Body of pancreas (tissue), 4 donors: ENCODE measurements at regions of chr15 and their contacts with region 1.

Region 1: DNA sequence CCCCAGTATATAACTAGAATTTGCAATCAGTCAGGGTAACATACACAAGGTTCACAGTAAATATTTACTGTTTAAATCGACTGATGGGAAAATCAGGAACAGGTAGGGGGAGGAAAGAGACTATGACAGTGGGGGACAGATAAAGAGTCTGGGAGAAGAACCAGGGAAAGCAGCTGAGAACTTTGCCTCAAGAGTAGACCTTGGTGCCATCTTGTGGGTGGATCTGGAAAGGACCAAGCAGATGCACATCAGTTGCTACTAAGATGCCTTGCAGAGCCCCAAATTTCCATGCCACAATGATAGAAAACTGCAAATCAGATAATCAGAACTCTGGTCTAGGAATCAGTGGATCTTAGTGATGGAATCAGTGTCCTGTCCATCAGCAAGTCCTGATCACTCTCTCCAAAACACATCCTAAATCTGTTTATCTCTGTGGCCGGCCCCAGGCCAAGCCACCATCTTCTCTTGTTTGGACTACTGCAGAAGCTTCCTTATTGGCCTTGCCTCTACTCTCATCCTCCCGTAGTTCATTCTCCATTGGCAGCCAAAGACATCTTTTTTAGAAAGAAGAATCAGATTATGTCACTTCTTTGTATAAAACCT is 62.7 kb downstream of the PDE8A start:
- DNase-seq: peak; percentile 59 to 75 (median 68)
- ATAC-seq: peak; percentile 64
- H3K4me3 ChIP-seq: no peak overlapping the region
- H3K27ac ChIP-seq: no peak overlapping the region
- H3K4me1 ChIP-seq: peaks cover 9% of the 10 kb centered on the region
- H3K27me3 ChIP-seq: no peaks in the 10 kb centered on the region
- CTCF ChIP-seq: peak; percentile 28 to 76 (median 64)
- POLR2A ChIP-seq: no peak

Region 2: GRCh38 chr15:84863565-84864443 is 180.5 kb before region 1 on chr15:
- intact Hi-C with region 1: no loop called
- DNase-seq: no peak
- ATAC-seq: no peak
- H3K4me3 ChIP-seq: no peak overlapping the region
- H3K27ac ChIP-seq: no peak overlapping the region
- H3K4me1 ChIP-seq: no peaks in the 10 kb centered on the region
- H3K27me3 ChIP-seq: no peaks in the 10 kb centered on the region
- CTCF ChIP-seq: no peak
- POLR2A ChIP-seq: no peak

Region 3: DNA sequence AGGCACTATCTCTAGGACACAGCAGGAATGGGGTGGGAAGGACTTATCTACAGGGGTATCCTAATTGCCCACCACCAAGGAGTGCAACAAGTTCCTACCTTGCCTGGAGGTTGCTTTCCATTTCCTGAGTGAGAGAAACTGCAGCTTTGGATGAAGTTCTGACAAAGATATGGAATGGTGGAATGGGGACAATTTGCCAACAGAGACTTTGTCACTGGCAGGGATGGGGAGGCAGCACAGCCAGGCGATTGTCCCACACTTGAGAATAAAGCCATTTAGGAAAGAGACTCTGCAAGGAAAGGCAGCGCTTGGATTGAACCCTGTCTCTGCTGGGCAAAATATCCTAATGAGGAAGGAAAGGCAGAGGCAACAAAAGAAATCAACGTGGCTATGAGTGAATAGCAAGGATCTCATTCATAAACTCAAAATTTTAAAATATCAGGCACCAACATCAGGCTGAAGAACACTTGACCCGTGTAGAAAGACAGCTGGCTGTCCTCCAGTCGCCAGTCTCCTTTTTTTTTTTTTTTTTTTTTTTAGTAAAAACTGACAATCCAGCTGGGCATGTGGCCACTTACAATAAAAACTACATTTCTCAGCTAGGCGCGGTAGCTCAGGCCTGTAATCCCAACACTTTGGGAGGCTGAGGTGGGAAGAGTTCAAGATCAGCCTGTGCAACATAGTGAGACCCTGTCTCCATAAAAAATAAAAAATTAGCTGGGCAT is 94.3 kb before region 1 on chr15:
- intact Hi-C with region 1: loop called (anchors 5 kb)
- DNase-seq: no peak
- ATAC-seq: no peak
- H3K4me3 ChIP-seq: no peak overlapping the region
- H3K27ac ChIP-seq: no peak overlapping the region
- H3K4me1 ChIP-seq: peaks cover 11% of the 10 kb centered on the region
- H3K27me3 ChIP-seq: no peaks in the 10 kb centered on the region
- CTCF ChIP-seq: no peak
- POLR2A ChIP-seq: no peak